Common myeloid progenitor, CD34-positive (primary cell): ENCODE measurements at regions of chr11 and their contacts with region 1.

Region 1: GRCh38 chr11:1706634-1707400 is 9.8 kb downstream of the KRTAP5-6 start:
- DNase-seq: peak; percentile 31 to 50 (median 44)
- H3K4me3 ChIP-seq: no peak overlapping the region
- H3K27ac ChIP-seq: no peak overlapping the region
- H3K4me1 ChIP-seq: peaks cover 0 to 7% (median 0%) of the 10 kb centered on the region in 4 experiments
- H3K27me3 ChIP-seq: peaks cover 0 to 3% (median 0%) of the 10 kb centered on the region in 5 experiments

Region 2: GRCh38 chr11:1659506-1659905 is 47.3 kb before region 1 on chr11:
- CTCF ChIA-PET with region 1: no interaction called
- POLR2A ChIA-PET with region 1: no interaction called
- DNase-seq: peak; percentile 21 to 67 (median 52)
- H3K4me3 ChIP-seq: peak overlapping the region in 1 of 7 experiments; percentile 38
- H3K27ac ChIP-seq: no peak overlapping the region
- H3K4me1 ChIP-seq: peaks cover 2 to 58% (median 42%) of the 10 kb centered on the region in 4 experiments
- H3K27me3 ChIP-seq: no peaks in the 10 kb centered on the region

Region 3: GRCh38 chr11:1807264-1807995 is 100.6 kb after region 1 on chr11:
- CTCF ChIA-PET with region 1: interaction called, 21 read pairs
- POLR2A ChIA-PET with region 1: no interaction called
- DNase-seq: peak; percentile 38 to 66 (median 61)
- H3K4me3 ChIP-seq: no peak overlapping the region
- H3K27ac ChIP-seq: no peak overlapping the region
- H3K4me1 ChIP-seq: peaks cover 0 to 12% (median 4%) of the 10 kb centered on the region in 4 experiments
- H3K27me3 ChIP-seq: peaks cover 0 to 20% (median 4%) of the 10 kb centered on the region in 5 experiments